ENCODE measurements at regions of chr5 and their contacts with region 1.

Region 1: GRCh38 chr5:159133041-159133741 is 33.5 kb upstream of the EBF1 start:
- DNase-seq: peak; percentile 70
- H3K4me3 ChIP-seq: no peak overlapping the region
- H3K27ac ChIP-seq: no peak overlapping the region
- H3K4me1 ChIP-seq: no peaks in the 10 kb centered on the region
- CTCF ChIP-seq: peak; percentile 93

Region 2: GRCh38 chr5:157761690-157762621 is 1371.2 kb before region 1 on chr5:
- CTCF ChIA-PET with region 1: no interaction called
- POLR2A ChIA-PET with region 1: no interaction called
- intact Hi-C with region 1: loop called (anchors 2 kb)
- DNase-seq: peak; percentile 79
- H3K4me3 ChIP-seq: no peak overlapping the region
- H3K27ac ChIP-seq: no peak overlapping the region
- H3K4me1 ChIP-seq: peaks cover 11% of the 10 kb centered on the region
- CTCF ChIP-seq: peak; percentile 96

Region 3: DNA sequence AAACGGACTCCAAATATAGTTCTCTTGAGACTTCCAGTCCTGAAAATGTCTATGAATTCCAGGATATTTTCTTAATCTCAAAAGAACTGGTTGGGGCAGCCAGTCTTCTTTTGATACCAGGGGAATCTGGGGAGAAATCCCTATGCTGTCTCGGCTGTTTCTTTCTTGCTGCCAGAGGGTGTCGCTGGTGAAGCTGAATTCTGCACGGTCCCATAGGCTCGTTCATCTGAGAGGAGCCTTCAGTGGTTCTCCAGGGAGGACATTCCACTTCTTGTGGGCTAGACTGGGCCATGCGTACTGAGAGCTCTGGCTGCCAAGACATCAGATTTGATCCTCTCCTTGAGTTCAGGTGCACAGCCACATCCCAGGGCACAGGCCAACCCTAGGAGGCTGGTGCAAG is 1119.3 kb before region 1 on chr5:
- CTCF ChIA-PET with region 1: no interaction called
- POLR2A ChIA-PET with region 1: no interaction called
- intact Hi-C with region 1: loop called (anchors 10 kb)
- DNase-seq: peak; percentile 43
- H3K4me3 ChIP-seq: no peak overlapping the region
- H3K27ac ChIP-seq: no peak overlapping the region
- H3K4me1 ChIP-seq: no peaks in the 10 kb centered on the region
- CTCF ChIP-seq: peak; percentile 73

Region 4: DNA sequence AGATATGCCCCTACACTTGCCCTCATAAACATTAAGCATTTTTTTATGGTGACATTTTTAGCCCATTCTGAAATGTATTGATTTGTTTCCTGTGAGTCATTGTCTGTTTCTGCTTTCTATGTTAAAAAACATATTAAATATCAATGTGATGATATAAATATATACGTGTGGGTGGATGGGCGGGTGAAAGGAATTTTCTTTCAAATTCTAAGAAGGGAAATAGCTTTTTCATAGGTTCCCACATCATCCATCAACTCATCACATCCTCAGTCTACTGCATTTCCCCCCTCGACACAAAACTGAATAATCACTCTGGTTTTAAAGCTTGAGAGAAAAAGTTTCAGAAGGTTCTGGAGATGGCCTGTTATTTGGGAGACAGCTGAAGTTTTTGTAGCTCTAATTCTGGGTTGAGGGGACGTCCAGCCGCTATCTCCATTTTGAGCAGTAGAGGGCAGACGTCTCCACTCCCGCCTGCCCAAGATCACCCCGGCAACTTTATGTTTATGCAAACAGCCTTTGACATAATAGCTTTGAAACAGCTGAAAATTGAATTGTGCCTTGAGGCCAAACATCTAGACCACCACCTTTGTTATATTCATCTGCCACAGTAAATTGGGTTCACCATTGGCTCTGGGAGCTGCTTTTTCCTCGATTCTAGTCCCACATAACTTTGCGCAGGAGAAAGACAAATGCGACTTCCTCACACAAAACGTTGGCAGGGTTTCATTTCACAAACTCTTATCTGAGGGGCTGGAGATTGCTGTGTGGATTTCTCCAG is 1058.0 kb before region 1 on chr5:
- CTCF ChIA-PET with region 1: no interaction called
- POLR2A ChIA-PET with region 1: no interaction called
- intact Hi-C with region 1: loop called (anchors 1 kb)
- DNase-seq: peak; percentile 69
- H3K4me3 ChIP-seq: no peak overlapping the region
- H3K27ac ChIP-seq: no peak overlapping the region
- H3K4me1 ChIP-seq: peaks cover 4% of the 10 kb centered on the region
- CTCF ChIP-seq: peak; percentile 98